Motor neuron (in vitro differentiated cells): ENCODE measurements at regions of chr15 and their contacts with region 1.

Region 1: DNA sequence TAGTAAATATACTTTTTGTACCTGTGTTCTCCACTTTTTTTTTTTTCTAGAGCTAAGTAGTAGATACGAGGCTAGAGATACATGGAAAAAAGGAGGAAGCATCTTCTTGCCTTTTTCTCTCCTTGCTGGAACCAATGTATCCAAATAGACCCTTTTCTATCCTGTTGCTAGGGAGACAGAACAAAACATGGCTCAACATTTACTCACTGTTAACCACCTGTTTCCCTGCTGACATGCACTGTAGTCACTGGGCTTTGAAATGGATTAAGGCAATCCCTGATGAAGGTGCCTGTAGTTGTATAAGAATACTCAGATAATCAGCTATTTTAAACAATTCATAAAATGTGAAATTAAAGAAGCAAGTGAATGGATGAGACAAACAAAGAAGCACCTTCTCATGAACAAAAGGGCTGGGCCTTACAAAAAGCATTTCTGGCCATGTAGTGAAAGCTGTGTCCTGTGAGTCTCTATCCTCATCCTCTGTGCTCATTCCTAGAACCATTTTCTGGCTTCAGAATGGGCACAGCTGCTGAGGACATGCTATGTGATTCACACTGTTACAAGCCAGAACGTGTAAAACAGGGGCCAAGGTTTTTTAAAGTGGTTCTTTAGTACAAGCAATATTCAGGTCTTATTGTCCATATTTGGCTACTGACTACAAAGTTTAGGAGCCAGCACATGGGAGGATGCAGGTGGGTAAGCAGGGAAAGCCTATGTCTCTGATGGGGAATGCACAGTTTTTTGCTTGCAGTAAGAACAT is 100.4 kb upstream of the NDN start:
- ATAC-seq: peak in 5 of 8 experiments; percentile 55 to 88 (median 61)
- H3K4me3 ChIP-seq: no peak overlapping the region
- H3K27ac ChIP-seq: no peak overlapping the region
- H3K4me1 ChIP-seq: peaks cover 0 to 11% of the 10 kb centered on the region in 2 donors

Region 2: GRCh38 chr15:23436421-23436820 is 351.1 kb before region 1 on chr15:
- in situ Hi-C with region 1: no loop called
- ATAC-seq: no peak
- H3K4me3 ChIP-seq: no peak overlapping the region
- H3K27ac ChIP-seq: no peak overlapping the region
- H3K4me1 ChIP-seq: no peaks in the 10 kb centered on the region

Region 3: GRCh38 chr15:23839893-23840474 is 52.5 kb after region 1 on chr15:
- in situ Hi-C with region 1: loop called in 1 of 9 experiments (anchors 10 kb)
- ATAC-seq: peak in 5 of 8 experiments; percentile 89 to 96 (median 91)
- H3K4me3 ChIP-seq: no peak overlapping the region
- H3K27ac ChIP-seq: peak overlapping the region in 1 of 2 donors; percentile 45
- H3K4me1 ChIP-seq: peaks cover 0 to 3% of the 10 kb centered on the region in 2 donors

Region 4: DNA sequence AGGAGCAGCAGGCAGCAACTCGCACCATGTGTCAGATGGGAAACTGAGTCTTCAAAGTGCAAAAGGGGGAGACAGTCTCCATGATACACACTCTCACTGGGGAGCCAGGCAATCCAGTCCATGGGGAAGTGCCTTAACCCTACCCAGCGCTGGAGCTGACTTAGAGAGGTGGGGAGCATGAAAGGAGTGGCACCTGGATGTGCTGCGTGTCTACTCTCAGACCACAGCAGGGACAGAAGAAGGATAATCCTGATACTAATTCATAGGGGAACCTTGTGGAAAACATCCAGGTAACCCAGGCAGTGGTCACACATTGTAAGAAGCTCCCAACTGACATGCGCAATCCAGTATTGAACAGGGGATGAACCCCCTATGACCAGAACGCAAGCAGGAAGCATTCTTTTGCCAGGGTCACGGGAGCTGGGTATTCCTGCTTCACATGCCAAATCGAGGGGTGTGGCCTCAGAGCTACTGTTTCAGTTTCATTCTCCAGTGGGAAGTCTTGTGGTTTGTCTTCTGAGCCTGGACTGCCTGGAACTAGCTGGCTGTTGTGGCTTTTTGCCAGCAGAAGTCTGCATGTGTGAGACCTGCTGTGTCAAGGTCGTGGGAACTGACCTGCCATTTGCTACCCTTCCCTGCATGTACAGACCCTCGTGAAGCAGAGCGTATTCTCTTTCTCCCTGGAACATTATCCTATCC is 267.2 kb after region 1 on chr15:
- in situ Hi-C with region 1: no loop called
- ATAC-seq: peak in 3 of 8 experiments; percentile 19 to 98 (median 80)
- H3K4me3 ChIP-seq: no peak overlapping the region
- H3K27ac ChIP-seq: no peak overlapping the region
- H3K4me1 ChIP-seq: peaks cover 0 to 4% of the 10 kb centered on the region in 2 donors